ENCODE measurements at regions of chr5 and their contacts with region 1.

Region 1: GRCh38 chr5:74919487-74919886 is 53.3 kb upstream of the FAM169A start:
- DNase-seq: peak; percentile 6 to 19 (median 12)
- H3K4me3 ChIP-seq: no peak overlapping the region
- H3K4me3 Mint-ChIP-seq: no peak overlapping the region
- H3K27ac ChIP-seq: no peak overlapping the region
- H3K27ac Mint-ChIP-seq: no peak overlapping the region
- H3K4me1 ChIP-seq: no peaks in the 10 kb centered on the region
- H3K4me1 Mint-ChIP-seq: no peaks in the 10 kb centered on the region
- H3K27me3 ChIP-seq: no peaks in the 10 kb centered on the region
- H3K27me3 Mint-ChIP-seq: peaks cover 0 to 7% (median 3%) of the 10 kb centered on the region in 3 donors
- CTCF ChIP-seq: peak; percentile 57

Region 2: GRCh38 chr5:73902327-73903051 is 1017.0 kb before region 1 on chr5:
- intact Hi-C with region 1: loop called in 1 of 2 experiments (anchors 10 kb)
- DNase-seq: peak; percentile 36 to 65 (median 51)
- H3K4me3 ChIP-seq: no peak overlapping the region
- H3K4me3 Mint-ChIP-seq: no peak overlapping the region
- H3K27ac ChIP-seq: no peak overlapping the region
- H3K27ac Mint-ChIP-seq: no peak overlapping the region
- H3K4me1 ChIP-seq: peaks cover 13 to 22% of the 10 kb centered on the region in 2 donors
- H3K4me1 Mint-ChIP-seq: peaks cover 25% of the 10 kb centered on the region
- H3K27me3 ChIP-seq: no peaks in the 10 kb centered on the region
- H3K27me3 Mint-ChIP-seq: peaks cover 0 to 4% (median 0%) of the 10 kb centered on the region in 3 donors
- CTCF ChIP-seq: peak; percentile 83

Region 3: DNA sequence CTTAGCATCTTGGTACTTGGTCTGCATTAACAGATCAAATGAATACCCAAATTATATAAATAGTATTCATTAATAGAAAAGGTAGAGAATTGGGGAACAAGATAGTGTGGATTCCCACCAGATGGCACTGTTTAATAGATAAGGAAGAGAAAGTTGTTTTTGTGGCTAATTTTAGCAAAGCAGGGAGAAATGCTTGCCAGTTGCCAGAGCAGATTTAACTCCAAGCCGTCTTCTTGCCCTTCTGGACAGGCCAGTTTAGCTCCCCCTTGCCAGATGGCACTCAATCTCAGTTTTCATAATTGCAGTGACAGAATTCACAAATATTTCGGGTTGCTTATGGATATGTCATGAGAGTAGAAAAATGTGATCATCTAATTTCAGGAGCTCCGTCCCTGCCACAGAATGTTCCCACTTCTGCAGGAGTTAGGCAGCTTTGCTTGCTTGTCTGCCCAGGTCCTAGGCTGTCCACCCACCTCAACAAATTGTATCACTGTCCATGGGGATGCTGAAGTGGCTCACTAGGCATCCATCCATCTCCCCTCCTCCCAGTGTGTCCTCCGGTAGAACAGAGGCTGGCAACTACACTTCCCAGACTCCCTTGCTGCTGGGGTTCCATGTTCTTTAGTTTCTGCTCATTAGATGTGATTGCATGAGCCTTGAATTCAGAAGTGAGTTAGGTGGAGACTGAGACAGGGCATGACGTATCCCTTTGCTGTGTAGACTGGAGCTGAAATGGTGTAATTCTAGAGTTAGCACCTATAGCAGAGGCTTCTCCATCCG is 246.3 kb before region 1 on chr5:
- intact Hi-C with region 1: loop called in 1 of 2 experiments (anchors 10 kb)
- DNase-seq: peak; percentile 25 to 53 (median 31)
- H3K4me3 ChIP-seq: no peak overlapping the region
- H3K4me3 Mint-ChIP-seq: peak overlapping the region; percentile 4 to 37
- H3K27ac ChIP-seq: no peak overlapping the region
- H3K27ac Mint-ChIP-seq: peak overlapping the region in 2 of 7 donors; percentile 17 to 20
- H3K4me1 ChIP-seq: no peaks in the 10 kb centered on the region
- H3K4me1 Mint-ChIP-seq: peaks cover 6% of the 10 kb centered on the region
- H3K27me3 ChIP-seq: no peaks in the 10 kb centered on the region
- H3K27me3 Mint-ChIP-seq: peaks cover 2 to 6% (median 3%) of the 10 kb centered on the region in 3 donors
- CTCF ChIP-seq: peak; percentile 67

Region 4: GRCh38 chr5:74772359-74772758 is 147.1 kb before region 1 on chr5:
- intact Hi-C with region 1: no loop called
- DNase-seq: peak in 2 of 3 donors; percentile 2 to 3
- H3K4me3 ChIP-seq: no peak overlapping the region
- H3K4me3 Mint-ChIP-seq: no peak overlapping the region
- H3K27ac ChIP-seq: no peak overlapping the region
- H3K27ac Mint-ChIP-seq: peak overlapping the region in 1 of 7 donors; percentile 36
- H3K4me1 ChIP-seq: peaks cover 8 to 10% of the 10 kb centered on the region in 2 donors
- H3K4me1 Mint-ChIP-seq: peaks cover 10% of the 10 kb centered on the region
- H3K27me3 ChIP-seq: no peaks in the 10 kb centered on the region
- H3K27me3 Mint-ChIP-seq: peaks cover 0 to 2% (median 0%) of the 10 kb centered on the region in 3 donors
- CTCF ChIP-seq: no peak

Region 5: GRCh38 chr5:75847561-75848021 is 928.1 kb after region 1 on chr5:
- intact Hi-C with region 1: no loop called
- DNase-seq: no peak
- H3K4me3 ChIP-seq: no peak overlapping the region
- H3K4me3 Mint-ChIP-seq: no peak overlapping the region
- H3K27ac ChIP-seq: no peak overlapping the region
- H3K27ac Mint-ChIP-seq: no peak overlapping the region
- H3K4me1 ChIP-seq: peaks cover 11 to 12% of the 10 kb centered on the region in 2 donors
- H3K4me1 Mint-ChIP-seq: peaks cover 14% of the 10 kb centered on the region
- H3K27me3 ChIP-seq: no peaks in the 10 kb centered on the region
- H3K27me3 Mint-ChIP-seq: peaks cover 2 to 7% (median 4%) of the 10 kb centered on the region in 3 donors
- CTCF ChIP-seq: no peak